ENCODE measurements at regions of chr15 and their contacts with region 1.

Region 1: GRCh38 chr15:94412979-94413746 is 181.8 kb downstream of the MCTP2 start:
- H3K4me3 Mint-ChIP-seq: no peak overlapping the region
- H3K27ac Mint-ChIP-seq: no peak overlapping the region
- H3K4me1 Mint-ChIP-seq: peaks cover 5% of the 10 kb centered on the region
- H3K27me3 Mint-ChIP-seq: no peaks in the 10 kb centered on the region

Region 2: DNA sequence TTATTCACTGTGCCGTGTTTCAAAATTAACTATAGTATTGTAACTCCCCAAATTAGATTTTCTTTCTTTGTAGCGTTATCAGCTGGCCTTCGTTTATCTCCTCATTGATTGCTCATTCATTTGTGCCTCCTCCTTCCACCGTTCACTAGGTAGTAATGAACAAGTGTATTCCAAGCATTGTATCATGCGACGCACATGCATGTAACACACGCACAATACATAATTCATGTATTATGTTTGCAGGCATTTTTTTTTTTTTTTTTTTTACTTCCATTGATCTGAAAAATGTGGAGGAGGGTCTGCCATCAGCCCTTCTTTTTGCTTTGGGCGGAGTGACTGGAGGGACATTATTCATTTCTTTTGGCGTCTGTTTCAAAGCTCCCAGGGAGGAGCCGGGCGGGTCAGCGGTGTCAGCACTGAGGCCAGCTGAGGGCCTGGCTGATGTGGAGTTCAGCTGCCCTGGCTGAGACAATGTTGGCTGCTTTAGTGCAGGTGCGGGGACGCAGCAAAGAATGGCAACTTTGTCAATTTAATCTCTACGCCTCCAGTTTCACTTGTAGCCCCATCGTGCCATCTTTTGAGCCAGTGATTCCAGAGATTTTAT is 74.8 kb before region 1 on chr15:
- intact Hi-C with region 1: no loop called
- H3K4me3 Mint-ChIP-seq: no peak overlapping the region
- H3K27ac Mint-ChIP-seq: no peak overlapping the region
- H3K4me1 Mint-ChIP-seq: no peaks in the 10 kb centered on the region
- H3K27me3 Mint-ChIP-seq: no peaks in the 10 kb centered on the region

Region 3: GRCh38 chr15:94467034-94467433 is 53.9 kb after region 1 on chr15:
- intact Hi-C with region 1: loop called (anchors 5 kb)
- H3K4me3 Mint-ChIP-seq: no peak overlapping the region
- H3K27ac Mint-ChIP-seq: no peak overlapping the region
- H3K4me1 Mint-ChIP-seq: no peaks in the 10 kb centered on the region
- H3K27me3 Mint-ChIP-seq: no peaks in the 10 kb centered on the region

Region 4: DNA sequence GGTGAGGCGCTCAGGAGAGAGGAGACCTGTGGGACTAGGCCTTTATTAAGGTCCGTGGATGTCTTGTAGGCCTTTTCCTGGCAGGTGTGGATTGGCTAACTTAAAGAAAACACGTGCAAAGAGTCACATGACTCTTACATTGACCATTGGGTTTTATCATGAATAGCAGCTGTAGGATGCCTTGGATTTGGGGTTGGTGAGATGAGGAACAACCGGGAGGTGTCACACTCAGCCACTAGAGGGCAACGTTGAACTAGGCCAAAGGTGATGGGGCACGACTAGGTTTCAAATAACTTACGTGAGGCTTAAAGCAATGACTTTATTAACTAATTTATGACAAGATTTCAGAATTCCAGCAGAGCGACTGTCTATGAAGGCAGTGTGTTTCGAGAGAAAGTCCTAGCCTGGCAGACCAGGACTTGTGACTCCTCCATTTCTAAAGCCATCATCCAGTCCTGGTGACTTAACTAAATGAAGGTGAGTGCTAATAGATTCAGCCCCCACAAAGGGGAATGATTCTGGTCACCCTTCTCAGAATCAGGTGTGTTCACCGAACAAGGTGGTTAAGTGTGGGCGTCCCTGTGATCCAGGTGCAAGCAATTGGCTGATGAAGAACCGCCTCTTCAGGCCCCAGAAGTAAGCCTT is 163.8 kb after region 1 on chr15:
- intact Hi-C with region 1: loop called (anchors 1 kb)
- H3K4me3 Mint-ChIP-seq: no peak overlapping the region
- H3K27ac Mint-ChIP-seq: no peak overlapping the region
- H3K4me1 Mint-ChIP-seq: peaks cover 10% of the 10 kb centered on the region
- H3K27me3 Mint-ChIP-seq: peaks cover 63% of the 10 kb centered on the region

Region 5: DNA sequence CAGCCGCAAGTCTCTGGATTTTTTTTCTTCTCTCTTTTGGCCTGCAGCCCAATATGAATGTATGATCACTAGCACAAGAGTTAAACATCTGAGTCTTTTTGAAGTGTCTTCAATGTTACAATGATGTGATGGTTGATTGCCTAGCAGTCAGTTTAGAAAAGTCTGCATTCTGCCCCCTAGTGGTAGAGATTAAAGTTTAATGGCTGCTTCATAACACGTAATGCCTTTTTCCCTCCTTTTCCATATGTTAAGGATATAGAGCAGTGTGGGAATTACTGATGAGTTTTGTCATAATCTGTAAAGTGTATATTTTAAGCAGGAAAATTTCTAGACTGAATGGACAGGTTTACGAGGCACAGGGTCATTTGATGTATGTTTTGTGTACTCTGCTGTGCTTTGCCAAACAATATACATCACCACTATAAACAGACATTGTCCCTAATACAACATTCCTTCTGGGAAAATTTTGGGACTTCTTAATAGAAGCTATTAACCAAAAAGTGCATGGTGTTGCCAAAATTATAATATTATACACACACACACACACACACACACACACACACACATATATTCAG is 878.8 kb after region 1 on chr15:
- intact Hi-C with region 1: loop called (anchors 2 kb)
- H3K4me3 Mint-ChIP-seq: no peak overlapping the region
- H3K27ac Mint-ChIP-seq: no peak overlapping the region
- H3K4me1 Mint-ChIP-seq: no peaks in the 10 kb centered on the region
- H3K27me3 Mint-ChIP-seq: peaks cover 25% of the 10 kb centered on the region